CD4-positive, alpha-beta T cell (primary cell): ENCODE measurements at regions of chr4 and their contacts with region 1.

Region 1: GRCh38 chr4:44678094-44679041 is at the start of gene GUF1:
- DNase-seq: peak; percentile 78 to 95 (median 86)
- ATAC-seq: peak; percentile 90
- H3K4me3 ChIP-seq: peak within 1 kb of the TSS; percentile 84
- H3K4me3 Mint-ChIP-seq: peak within 1 kb of the TSS; percentile 99
- H3K27ac ChIP-seq: peak within 1 kb of the TSS; percentile 92 to 95
- H3K27ac Mint-ChIP-seq: peak within 1 kb of the TSS; percentile 100
- H3K4me1 ChIP-seq: peaks cover 7% of the 10 kb centered on the region
- H3K4me1 Mint-ChIP-seq: peaks cover 43% of the 10 kb centered on the region
- H3K27me3 ChIP-seq: no peaks in the 10 kb centered on the region
- H3K27me3 Mint-ChIP-seq: no peaks in the 10 kb centered on the region
- CTCF ChIP-seq: no peak
- total RNA-seq, gene GUF1: 16.7 to 21.1 TPM

Region 2: GRCh38 chr4:44726262-44726871 is 48.0 kb after region 1 on chr4 and contains the start of gene GNPDA2:
- CTCF ChIA-PET with region 1: interaction called, 4 read pairs
- POLR2A ChIA-PET with region 1: interaction called, 76 read pairs
- intact Hi-C with region 1: loop called (anchors 2 to 5 kb)
- DNase-seq: peak; percentile 63 to 91 (median 77)
- ATAC-seq: peak; percentile 85
- H3K4me3 ChIP-seq: peak within 1 kb of the TSS; percentile 91
- H3K4me3 Mint-ChIP-seq: peak within 1 kb of the TSS; percentile 95
- H3K27ac ChIP-seq: peak within 1 kb of the TSS in 1 of 2 donors; percentile 50
- H3K27ac Mint-ChIP-seq: peak within 1 kb of the TSS; percentile 83
- H3K4me1 ChIP-seq: peaks cover 25% of the 10 kb centered on the region
- H3K4me1 Mint-ChIP-seq: peaks cover 52% of the 10 kb centered on the region
- H3K27me3 ChIP-seq: no peaks in the 10 kb centered on the region
- H3K27me3 Mint-ChIP-seq: no peaks in the 10 kb centered on the region
- CTCF ChIP-seq: no peak
- total RNA-seq, gene GNPDA2: 7.6 to 9.0 TPM